ENCODE measurements at regions of chr9 and their contacts with region 1.

Region 1: DNA sequence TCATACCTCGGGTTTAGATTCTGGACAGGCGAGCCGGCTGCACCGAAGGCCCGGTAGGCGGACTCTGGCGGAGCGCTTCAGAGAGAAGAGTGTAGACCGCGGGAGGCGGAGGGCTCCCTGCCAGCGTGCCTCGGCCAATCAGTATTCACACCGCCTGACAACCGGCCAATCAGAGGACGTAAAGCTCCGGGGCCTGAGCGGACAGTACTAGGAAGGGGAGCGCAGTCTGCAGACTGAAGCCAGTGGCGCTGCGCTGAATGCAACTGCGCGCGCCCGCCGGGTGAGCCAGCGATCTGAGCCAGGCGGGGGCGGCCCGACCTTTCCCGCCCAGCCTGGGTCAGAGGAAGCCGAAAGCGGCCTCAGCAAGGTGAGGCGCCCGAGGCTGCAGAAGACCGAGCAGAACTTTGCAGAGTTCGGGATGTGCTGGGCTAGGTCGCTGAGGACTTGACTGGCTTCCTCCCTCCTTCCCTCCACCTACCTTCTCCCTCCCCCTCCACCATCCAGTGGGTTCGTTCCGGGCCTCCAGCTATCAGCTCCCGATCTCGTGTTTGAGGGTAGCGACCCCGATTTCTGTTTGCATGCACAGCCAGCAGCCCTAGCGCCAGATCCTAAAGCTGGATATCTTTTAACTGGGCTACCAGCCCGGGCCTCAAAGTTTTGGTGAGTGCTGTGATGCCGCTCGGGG is at the start of gene DMRT2:
- DNase-seq: peak; percentile 73
- H3K4me3 Mint-ChIP-seq: peak within 1 kb of the TSS; percentile 61
- H3K27ac Mint-ChIP-seq: peak within 1 kb of the TSS; percentile 45
- H3K4me1 Mint-ChIP-seq: peaks cover 40% of the 10 kb centered on the region
- H3K27me3 Mint-ChIP-seq: peaks cover 86% of the 10 kb centered on the region
- total RNA-seq, gene DMRT2: 0.21 and 0.26 TPM in 2 replicates

Region 2: DNA sequence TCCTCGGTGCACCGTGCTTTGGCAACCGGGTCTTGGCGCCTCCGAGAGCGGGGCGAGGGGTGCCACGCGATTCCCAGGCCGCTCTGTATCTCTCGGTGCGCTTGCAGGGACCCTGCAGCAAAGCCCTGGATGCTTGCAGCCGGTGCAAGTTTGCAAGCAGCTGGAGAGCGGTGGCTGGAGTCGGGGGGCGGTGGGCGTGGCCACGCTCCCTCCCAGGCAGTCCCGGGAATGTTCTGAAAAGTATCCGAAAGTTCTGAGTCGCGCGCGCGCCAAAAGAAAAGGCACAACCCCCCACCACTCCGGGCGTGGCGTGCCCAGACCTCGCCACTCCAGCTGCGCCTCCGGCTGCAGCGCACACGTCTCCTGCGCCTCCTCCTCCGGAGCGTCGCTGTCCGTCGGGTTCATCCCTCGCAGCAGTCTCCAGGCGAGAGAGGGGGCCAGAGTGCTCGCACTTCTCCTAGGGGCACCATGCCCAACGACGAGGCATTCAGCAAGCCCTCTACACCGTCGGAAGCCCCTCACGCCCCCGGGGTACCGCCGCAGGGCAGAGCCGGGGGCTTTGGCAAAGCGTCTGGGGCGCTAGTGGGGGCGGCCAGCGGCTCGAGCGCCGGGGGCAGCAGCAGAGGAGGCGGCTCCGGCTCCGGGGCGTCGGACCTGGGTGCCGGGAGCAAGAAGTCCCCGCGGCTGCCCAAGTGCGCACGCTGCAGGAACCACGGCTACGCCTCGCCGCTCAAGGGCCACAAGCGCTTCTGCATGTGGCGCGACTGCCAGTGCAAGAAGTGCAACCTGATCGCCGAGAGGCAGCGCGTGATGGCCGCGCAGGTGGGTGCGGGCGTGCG is 208.7 kb before region 1 on chr9 and contains the start of gene DMRT1:
- intact Hi-C with region 1: loop called (anchors 2 kb)
- DNase-seq: no peak
- H3K4me3 Mint-ChIP-seq: no peak within 1 kb of the TSS
- H3K27ac Mint-ChIP-seq: no peak within 1 kb of the TSS
- H3K4me1 Mint-ChIP-seq: peaks cover 2% of the 10 kb centered on the region
- H3K27me3 Mint-ChIP-seq: peaks cover 41% of the 10 kb centered on the region
- total RNA-seq, gene DMRT1: not detected in 2 replicates

Region 3: GRCh38 chr9:974031-974995 is 75.9 kb before region 1 on chr9:
- intact Hi-C with region 1: loop called (anchors 1 kb)
- DNase-seq: no peak
- H3K4me3 Mint-ChIP-seq: no peak overlapping the region
- H3K27ac Mint-ChIP-seq: no peak overlapping the region
- H3K4me1 Mint-ChIP-seq: peaks cover 3% of the 10 kb centered on the region
- H3K27me3 Mint-ChIP-seq: peaks cover 76% of the 10 kb centered on the region

Region 4: DNA sequence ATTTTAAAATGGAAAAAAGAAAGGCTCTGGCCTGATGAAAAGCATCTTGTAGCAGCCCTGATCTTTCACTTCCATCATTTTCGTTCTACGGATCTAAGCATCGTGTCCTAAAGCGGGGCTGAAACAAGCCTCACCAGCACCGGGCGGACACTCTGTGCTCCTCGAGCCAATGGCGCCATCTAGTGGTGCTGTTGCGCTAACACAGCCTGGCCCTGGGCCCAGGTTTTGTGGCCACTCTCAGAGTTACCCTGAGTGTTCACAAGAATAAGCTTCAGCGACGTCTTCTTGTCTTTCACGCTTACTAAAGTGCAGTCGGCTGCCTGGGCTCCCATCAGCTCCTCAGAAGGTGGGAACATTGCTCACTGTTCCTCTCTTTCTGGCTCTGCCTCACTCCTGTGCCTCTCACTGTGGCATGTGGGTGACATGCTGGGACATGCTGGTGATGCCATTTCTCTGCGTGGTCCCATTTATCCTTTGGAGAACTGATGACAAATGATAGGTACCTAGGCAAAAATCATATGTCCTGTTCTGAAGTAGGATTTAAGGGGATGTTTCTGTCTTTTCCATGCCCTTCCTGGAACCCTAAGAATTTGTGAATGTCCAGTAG is 41.1 kb before region 1 on chr9:
- intact Hi-C with region 1: loop called (anchors 5 kb)
- DNase-seq: peak; percentile 93
- H3K4me3 Mint-ChIP-seq: no peak overlapping the region
- H3K27ac Mint-ChIP-seq: no peak overlapping the region
- H3K4me1 Mint-ChIP-seq: peaks cover 7% of the 10 kb centered on the region
- H3K27me3 Mint-ChIP-seq: peaks cover 6% of the 10 kb centered on the region

Measured in activated CD4-positive, alpha-beta T cell treated with anti-CD3 and anti-CD28 coated beads, Interleukin-2, amount 10 ng/mL, durations not matched to agents 24 days and 14 days (primary cell).